ENCODE measurements at regions of chr10 and their contacts with region 1.

Region 1: GRCh38 chr10:69229622-69229928 is 9.4 kb downstream of the HKDC1 start:
- DNase-seq: no peak
- ATAC-seq: no peak
- H3K4me3 Mint-ChIP-seq: peak overlapping the region; percentile 85
- H3K27ac Mint-ChIP-seq: peak overlapping the region; percentile 97
- H3K4me1 Mint-ChIP-seq: peaks cover 58% of the 10 kb centered on the region
- H3K27me3 Mint-ChIP-seq: peaks cover 2% of the 10 kb centered on the region

Region 2: DNA sequence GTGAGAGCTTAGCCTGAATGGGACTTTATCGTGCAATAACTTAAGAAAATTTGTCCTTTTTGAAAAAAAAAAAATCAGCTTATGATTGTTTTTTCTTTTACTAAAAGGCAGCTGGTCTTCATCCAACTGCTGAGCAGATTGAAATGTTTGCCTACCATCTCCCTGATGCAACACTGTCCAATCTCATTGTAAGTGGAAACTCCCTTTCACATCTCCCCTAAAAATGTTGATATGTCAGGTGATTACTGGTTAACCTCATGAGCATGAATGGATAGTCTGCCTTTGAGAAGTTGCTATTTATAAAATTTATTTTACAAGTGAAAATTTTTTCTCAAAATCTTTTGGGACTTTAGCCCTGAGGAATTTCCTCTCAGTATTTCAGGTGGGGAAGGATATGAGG is 27.2 kb before region 1 on chr10:
- POLR2A ChIA-PET with region 1: interaction called, 15 read pairs
- DNase-seq: no peak
- ATAC-seq: peak; percentile 44
- H3K4me3 Mint-ChIP-seq: no peak overlapping the region
- H3K27ac Mint-ChIP-seq: peak overlapping the region; percentile 67
- H3K4me1 Mint-ChIP-seq: peaks cover 43% of the 10 kb centered on the region
- H3K27me3 Mint-ChIP-seq: no peaks in the 10 kb centered on the region

Region 3: GRCh38 chr10:69217119-69217754 is 12.3 kb before region 1 on chr10:
- POLR2A ChIA-PET with region 1: interaction called, 12 read pairs
- DNase-seq: no peak
- ATAC-seq: no peak
- H3K4me3 Mint-ChIP-seq: no peak overlapping the region
- H3K27ac Mint-ChIP-seq: no peak overlapping the region
- H3K4me1 Mint-ChIP-seq: peaks cover 38% of the 10 kb centered on the region
- H3K27me3 Mint-ChIP-seq: peaks cover 10% of the 10 kb centered on the region

Region 4: GRCh38 chr10:69262292-69262751 is 32.7 kb after region 1 on chr10:
- POLR2A ChIA-PET with region 1: no interaction called
- DNase-seq: no peak
- ATAC-seq: peak; percentile 63
- H3K4me3 Mint-ChIP-seq: no peak overlapping the region
- H3K27ac Mint-ChIP-seq: no peak overlapping the region
- H3K4me1 Mint-ChIP-seq: peaks cover 15% of the 10 kb centered on the region
- H3K27me3 Mint-ChIP-seq: no peaks in the 10 kb centered on the region

Measured in activated naive CD8-positive, alpha-beta T cell treated with anti-CD3 and anti-CD28 coated beads, Interleukin-2, amount 10 ng/mL, durations not matched to agents 7 days and 5 days (primary cell).